Caco-2 (cell line): ENCODE measurements at regions of chr7 and their contacts with region 1.

Region 1: GRCh38 chr7:129343099-129343700 is 91.0 kb upstream of the STRIP2 start:
- DNase-seq: peak in 1 of 2 experiments; percentile 44
- H3K4me3 ChIP-seq: no peak overlapping the region
- H3K4me3 Mint-ChIP-seq: no peak overlapping the region
- H3K27ac Mint-ChIP-seq: no peak overlapping the region
- H3K4me1 ChIP-seq: no peaks in the 10 kb centered on the region
- H3K4me1 Mint-ChIP-seq: peaks cover 20% of the 10 kb centered on the region
- H3K27me3 ChIP-seq: no peaks in the 10 kb centered on the region
- H3K27me3 Mint-ChIP-seq: no peaks in the 10 kb centered on the region
- CTCF ChIP-seq: peak; percentile 69

Region 2: DNA sequence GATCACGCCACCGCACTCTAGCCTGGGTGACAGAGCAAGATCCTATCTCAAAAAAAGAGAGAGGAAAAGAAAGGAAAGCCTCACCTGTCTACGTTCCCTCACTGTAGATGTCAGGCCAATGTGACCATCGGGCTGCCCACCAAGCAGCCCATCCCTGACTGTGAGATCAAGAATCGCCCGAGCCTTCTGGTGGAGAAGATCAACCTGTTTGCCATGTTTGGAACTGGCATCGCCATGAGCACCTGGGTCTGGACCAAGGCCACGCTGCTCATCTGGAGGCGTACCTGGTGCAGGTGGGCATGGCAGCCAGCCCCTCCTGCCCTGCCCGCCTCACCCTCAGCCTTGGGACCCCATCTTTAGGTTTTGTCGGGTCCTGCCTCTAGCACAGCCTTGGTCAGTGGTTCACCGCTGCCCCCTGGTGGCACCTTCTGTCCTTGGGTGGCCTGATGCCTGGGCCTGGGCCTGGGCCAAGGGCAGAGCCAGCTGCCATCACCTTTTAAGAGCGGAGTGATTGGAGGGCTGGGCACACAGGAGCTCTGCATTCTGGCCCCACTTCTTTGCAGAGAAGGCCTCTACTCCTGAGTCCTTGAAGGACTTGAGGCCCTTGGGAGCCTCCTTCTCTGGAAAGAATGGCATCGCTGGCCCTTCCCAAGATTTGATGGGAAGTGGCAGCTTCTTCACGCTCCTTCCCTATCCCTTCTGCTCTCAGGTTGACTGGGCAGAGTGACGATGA is 132.8 kb before region 1 on chr7:
- CTCF ChIA-PET with region 1: no interaction called
- POLR2A ChIA-PET with region 1: no interaction called
- intact Hi-C with region 1: no loop called
- DNase-seq: peak; percentile 71 to 83
- H3K4me3 ChIP-seq: no peak overlapping the region
- H3K4me3 Mint-ChIP-seq: no peak overlapping the region
- H3K27ac Mint-ChIP-seq: no peak overlapping the region
- H3K4me1 ChIP-seq: no peaks in the 10 kb centered on the region
- H3K4me1 Mint-ChIP-seq: no peaks in the 10 kb centered on the region
- H3K27me3 ChIP-seq: no peaks in the 10 kb centered on the region
- H3K27me3 Mint-ChIP-seq: no peaks in the 10 kb centered on the region
- CTCF ChIP-seq: peak; percentile 87 to 94

Region 3: GRCh38 chr7:129376076-129376777 is 33.0 kb after region 1 on chr7:
- CTCF ChIA-PET with region 1: interaction called, 12 read pairs
- POLR2A ChIA-PET with region 1: no interaction called
- intact Hi-C with region 1: no loop called
- DNase-seq: peak; percentile 66 to 69
- H3K4me3 ChIP-seq: no peak overlapping the region
- H3K4me3 Mint-ChIP-seq: no peak overlapping the region
- H3K27ac Mint-ChIP-seq: no peak overlapping the region
- H3K4me1 ChIP-seq: no peaks in the 10 kb centered on the region
- H3K4me1 Mint-ChIP-seq: no peaks in the 10 kb centered on the region
- H3K27me3 ChIP-seq: no peaks in the 10 kb centered on the region
- H3K27me3 Mint-ChIP-seq: no peaks in the 10 kb centered on the region
- CTCF ChIP-seq: peak; percentile 74 to 77